ENCODE measurements at regions of chr6 and their contacts with region 1.

Region 1: GRCh38 chr6:149335924-149336608 is 18.6 kb downstream of the TAB2 start:
- DNase-seq: peak; percentile 75
- H3K4me3 Mint-ChIP-seq: peak overlapping the region; percentile 62
- H3K27ac Mint-ChIP-seq: peak overlapping the region; percentile 95
- H3K4me1 Mint-ChIP-seq: peaks cover 86% of the 10 kb centered on the region
- H3K27me3 Mint-ChIP-seq: no peaks in the 10 kb centered on the region

Region 2: DNA sequence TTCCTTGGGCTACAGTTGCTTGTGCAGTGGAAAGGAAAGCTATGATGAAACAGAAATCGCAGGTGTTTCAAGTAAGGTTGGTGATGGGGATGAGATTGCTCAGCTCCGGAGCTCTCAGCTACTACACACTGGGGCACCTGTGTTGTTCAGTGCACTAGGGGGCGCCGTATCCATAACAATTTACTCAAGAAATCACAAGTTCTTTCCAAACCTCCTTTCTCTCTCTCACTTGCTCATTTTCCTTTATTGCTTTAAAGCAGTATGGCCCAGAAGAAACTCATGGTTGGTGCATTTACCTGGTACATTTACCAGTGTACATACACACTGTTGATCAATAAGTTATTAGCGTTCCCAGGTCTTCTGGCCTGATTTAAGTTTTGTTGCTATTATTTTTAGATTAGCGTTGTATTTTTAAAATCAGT is 253.8 kb before region 1 on chr6:
- CTCF ChIA-PET with region 1: interaction called, 10 read pairs
- POLR2A ChIA-PET with region 1: interaction called, 7 read pairs
- intact Hi-C with region 1: loop called (anchors 5 kb)
- DNase-seq: peak; percentile 93
- H3K4me3 Mint-ChIP-seq: no peak overlapping the region
- H3K27ac Mint-ChIP-seq: peak overlapping the region; percentile 26
- H3K4me1 Mint-ChIP-seq: peaks cover 79% of the 10 kb centered on the region
- H3K27me3 Mint-ChIP-seq: no peaks in the 10 kb centered on the region

Region 3: GRCh38 chr6:149324428-149324827 is 11.6 kb before region 1 on chr6:
- CTCF ChIA-PET with region 1: interaction called, 6 read pairs
- POLR2A ChIA-PET with region 1: interaction called, 57 read pairs
- intact Hi-C with region 1: loop called (anchors 1 kb)
- DNase-seq: no peak
- H3K4me3 Mint-ChIP-seq: peak overlapping the region; percentile 40
- H3K27ac Mint-ChIP-seq: peak overlapping the region; percentile 81
- H3K4me1 Mint-ChIP-seq: peaks cover 80% of the 10 kb centered on the region
- H3K27me3 Mint-ChIP-seq: no peaks in the 10 kb centered on the region

Region 4: DNA sequence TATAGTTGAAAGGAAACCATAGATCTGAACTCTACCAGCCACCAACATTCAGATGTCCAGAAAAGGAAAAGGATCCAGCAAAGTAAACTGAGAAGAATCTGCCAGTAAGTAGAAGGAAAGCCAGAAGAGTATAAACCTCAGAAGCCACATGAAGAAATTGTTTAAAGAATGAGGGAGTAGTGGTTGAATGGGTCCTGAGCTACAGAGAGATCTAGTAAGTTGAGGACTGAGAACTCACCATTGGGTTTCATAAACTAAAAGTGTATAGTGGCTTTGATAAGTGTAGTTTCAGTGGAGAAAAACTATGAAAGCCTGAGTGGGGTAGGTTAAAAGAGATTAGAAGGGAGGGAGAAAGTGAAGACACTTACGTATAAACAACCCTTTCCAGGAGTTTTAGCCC is 32.0 kb after region 1 on chr6:
- CTCF ChIA-PET with region 1: interaction called, 3 read pairs
- POLR2A ChIA-PET with region 1: interaction called, 4 read pairs
- intact Hi-C with region 1: loop called (anchors 1 kb)
- DNase-seq: no peak
- H3K4me3 Mint-ChIP-seq: no peak overlapping the region
- H3K27ac Mint-ChIP-seq: no peak overlapping the region
- H3K4me1 Mint-ChIP-seq: peaks cover 45% of the 10 kb centered on the region
- H3K27me3 Mint-ChIP-seq: no peaks in the 10 kb centered on the region

Region 5: GRCh38 chr6:149389509-149390297 is 53.6 kb after region 1 on chr6:
- CTCF ChIA-PET with region 1: no interaction called
- POLR2A ChIA-PET with region 1: no interaction called
- intact Hi-C with region 1: loop called (anchors 2 kb)
- DNase-seq: no peak
- H3K4me3 Mint-ChIP-seq: no peak overlapping the region
- H3K27ac Mint-ChIP-seq: peak overlapping the region; percentile 13
- H3K4me1 Mint-ChIP-seq: peaks cover 69% of the 10 kb centered on the region
- H3K27me3 Mint-ChIP-seq: no peaks in the 10 kb centered on the region